Naive thymus-derived CD4-positive, alpha-beta T cell (primary cell): ENCODE measurements at regions of chr7 and their contacts with region 1.

Region 1: DNA sequence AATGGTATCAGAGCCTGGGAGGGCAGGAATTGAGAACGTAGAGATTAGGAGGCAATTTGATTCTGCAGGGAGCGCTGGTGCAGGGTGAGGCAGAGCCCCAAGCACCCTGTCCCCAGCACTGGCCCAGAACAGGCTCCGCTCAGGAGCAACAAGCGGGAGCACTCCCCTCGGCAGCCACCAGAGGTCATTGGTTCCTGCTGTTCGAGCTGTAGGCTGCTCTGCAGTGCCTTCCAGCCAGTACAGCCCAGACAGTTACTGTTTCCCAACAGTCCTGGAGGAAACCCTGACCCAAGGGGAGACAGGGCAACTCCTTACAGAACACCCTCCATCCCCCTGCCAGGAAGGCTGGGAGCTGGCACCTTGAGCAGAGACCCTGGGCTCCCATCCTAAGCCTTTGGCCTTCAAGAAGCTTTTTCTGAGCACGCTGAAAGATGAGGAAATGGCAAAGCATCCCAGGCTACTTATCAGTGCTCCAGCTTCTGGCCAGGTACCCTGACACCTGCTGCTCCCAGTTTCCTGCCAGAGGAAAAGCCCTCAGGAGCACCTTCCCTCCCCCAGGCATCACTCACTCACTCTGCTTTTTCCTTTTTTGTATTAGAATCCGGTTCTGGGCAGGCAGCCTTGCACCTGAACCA is 71.2 kb upstream of the EFCAB10 start:
- DNase-seq: peak; percentile 34 to 68 (median 58)
- ATAC-seq: peak; percentile 82
- H3K4me3 ChIP-seq: no peak overlapping the region
- H3K4me3 Mint-ChIP-seq: no peak overlapping the region
- H3K27ac ChIP-seq: no peak overlapping the region
- H3K27ac Mint-ChIP-seq: peak overlapping the region in 2 of 9 donors; percentile 27 to 59
- H3K4me1 ChIP-seq: peaks cover 0 to 5% of the 10 kb centered on the region in 2 donors
- H3K4me1 Mint-ChIP-seq: peaks cover 9 to 24% (median 14%) of the 10 kb centered on the region in 7 donors
- H3K27me3 ChIP-seq: no peaks in the 10 kb centered on the region
- H3K27me3 Mint-ChIP-seq: no peaks in the 10 kb centered on the region

Region 2: DNA sequence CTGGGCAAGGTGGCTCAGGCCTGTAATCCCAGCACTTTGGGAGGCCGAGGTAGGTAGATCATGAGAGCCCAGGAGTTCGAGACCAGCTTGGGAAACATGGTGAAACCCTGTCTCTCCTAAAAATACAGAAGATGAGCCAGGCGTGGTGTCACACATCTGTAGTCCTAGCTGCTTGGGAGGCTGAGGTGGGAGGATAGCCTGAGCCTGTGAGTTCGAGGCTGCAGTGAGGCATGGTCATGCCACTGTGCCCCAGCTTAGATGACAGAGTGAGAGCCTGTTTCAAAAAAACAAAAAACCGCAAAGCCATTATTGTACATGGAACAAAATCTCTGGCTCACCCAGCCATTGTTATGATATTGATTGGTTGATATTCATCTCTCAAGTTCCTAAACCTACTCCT is 584.8 kb before region 1 on chr7:
- CTCF ChIA-PET with region 1: no interaction called
- POLR2A ChIA-PET with region 1: no interaction called
- intact Hi-C with region 1: no loop called
- DNase-seq: no peak
- ATAC-seq: no peak
- H3K4me3 ChIP-seq: no peak overlapping the region
- H3K4me3 Mint-ChIP-seq: no peak overlapping the region
- H3K27ac ChIP-seq: no peak overlapping the region
- H3K27ac Mint-ChIP-seq: peak overlapping the region in 5 of 9 donors; percentile 13 to 56 (median 15)
- H3K4me1 ChIP-seq: peaks cover 0 to 6% of the 10 kb centered on the region in 2 donors
- H3K4me1 Mint-ChIP-seq: peaks cover 14 to 45% (median 21%) of the 10 kb centered on the region in 7 donors
- H3K27me3 ChIP-seq: no peaks in the 10 kb centered on the region
- H3K27me3 Mint-ChIP-seq: no peaks in the 10 kb centered on the region

Region 3: GRCh38 chr7:105173586-105173985 is 478.9 kb before region 1 on chr7:
- CTCF ChIA-PET with region 1: no interaction called
- POLR2A ChIA-PET with region 1: no interaction called
- intact Hi-C with region 1: no loop called
- DNase-seq: no peak
- ATAC-seq: no peak
- H3K4me3 ChIP-seq: no peak overlapping the region
- H3K4me3 Mint-ChIP-seq: no peak overlapping the region
- H3K27ac ChIP-seq: no peak overlapping the region
- H3K27ac Mint-ChIP-seq: peak overlapping the region in 1 of 9 donors; percentile 54
- H3K4me1 ChIP-seq: no peaks in the 10 kb centered on the region
- H3K4me1 Mint-ChIP-seq: peaks cover 7 to 49% (median 28%) of the 10 kb centered on the region in 7 donors
- H3K27me3 ChIP-seq: no peaks in the 10 kb centered on the region
- H3K27me3 Mint-ChIP-seq: no peaks in the 10 kb centered on the region

Region 4: DNA sequence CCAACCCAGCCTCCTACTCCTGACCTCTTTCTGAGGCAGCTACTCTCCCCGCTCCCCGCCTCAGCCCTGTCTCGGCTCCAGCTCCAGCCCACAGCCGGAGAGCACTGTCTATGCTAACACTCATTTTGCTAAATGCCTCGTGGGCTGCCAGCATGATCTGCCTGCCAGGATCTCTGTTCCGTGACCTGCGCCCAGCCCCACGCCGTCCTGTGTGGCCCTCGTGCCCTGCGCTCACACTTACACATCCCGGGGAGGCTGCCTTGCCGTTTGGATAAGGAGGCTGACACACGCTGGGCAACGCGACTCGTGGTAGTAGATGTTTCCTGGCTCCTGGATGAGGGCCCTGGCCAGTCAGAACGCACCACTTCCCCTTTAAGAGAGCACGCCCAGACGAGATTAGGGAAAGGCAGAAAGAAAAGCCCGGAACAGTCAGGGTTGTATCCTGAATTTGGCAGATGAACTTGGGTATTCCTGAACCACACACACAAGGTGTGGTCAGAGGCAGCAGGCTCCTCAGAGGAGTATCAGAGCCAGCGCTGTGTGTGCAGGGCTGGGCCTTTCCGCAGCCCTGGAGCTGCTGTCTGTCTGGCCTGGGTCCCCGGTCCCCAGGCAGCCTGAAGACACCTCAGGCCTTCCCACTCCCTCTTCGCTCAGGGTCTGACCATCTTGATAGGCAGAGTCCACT is 26.5 kb after region 1 on chr7:
- CTCF ChIA-PET with region 1: interaction called, 5 read pairs
- POLR2A ChIA-PET with region 1: interaction called, 3 read pairs
- intact Hi-C with region 1: loop called in 1 of 2 experiments (anchors 2 kb)
- DNase-seq: peak in 5 of 9 donors; percentile 11 to 33 (median 26)
- ATAC-seq: peak; percentile 47
- H3K4me3 ChIP-seq: peak overlapping the region; percentile 30
- H3K4me3 Mint-ChIP-seq: peak overlapping the region; percentile 76 to 97 (median 86)
- H3K27ac ChIP-seq: peak overlapping the region; percentile 59
- H3K27ac Mint-ChIP-seq: peak overlapping the region; percentile 87 to 99 (median 95)
- H3K4me1 ChIP-seq: peaks cover 41 to 43% of the 10 kb centered on the region in 2 donors
- H3K4me1 Mint-ChIP-seq: peaks cover 56 to 94% (median 86%) of the 10 kb centered on the region in 7 donors
- H3K27me3 ChIP-seq: no peaks in the 10 kb centered on the region
- H3K27me3 Mint-ChIP-seq: no peaks in the 10 kb centered on the region

Region 5: GRCh38 chr7:105759670-105760550 is 107.4 kb after region 1 on chr7:
- CTCF ChIA-PET with region 1: interaction called, 6 read pairs
- POLR2A ChIA-PET with region 1: interaction called, 7 read pairs
- intact Hi-C with region 1: loop called (anchors 1 to 2 kb)
- DNase-seq: peak in 2 of 9 donors; percentile 21 to 24
- ATAC-seq: peak; percentile 52
- H3K4me3 ChIP-seq: no peak overlapping the region
- H3K4me3 Mint-ChIP-seq: peak overlapping the region in 8 of 10 donors; percentile 1 to 82 (median 54)
- H3K27ac ChIP-seq: no peak overlapping the region
- H3K27ac Mint-ChIP-seq: peak overlapping the region in 8 of 9 donors; percentile 32 to 90 (median 76)
- H3K4me1 ChIP-seq: peaks cover 31 to 32% of the 10 kb centered on the region in 2 donors
- H3K4me1 Mint-ChIP-seq: peaks cover 22 to 53% (median 43%) of the 10 kb centered on the region in 7 donors
- H3K27me3 ChIP-seq: no peaks in the 10 kb centered on the region
- H3K27me3 Mint-ChIP-seq: peaks cover 0 to 11% (median 0%) of the 10 kb centered on the region in 5 donors

Region 6: GRCh38 chr7:105830391-105831301 is 178.2 kb after region 1 on chr7:
- CTCF ChIA-PET with region 1: no interaction called
- POLR2A ChIA-PET with region 1: no interaction called
- intact Hi-C with region 1: no loop called
- DNase-seq: no peak
- ATAC-seq: no peak
- H3K4me3 ChIP-seq: no peak overlapping the region
- H3K4me3 Mint-ChIP-seq: no peak overlapping the region
- H3K27ac ChIP-seq: no peak overlapping the region
- H3K27ac Mint-ChIP-seq: no peak overlapping the region
- H3K4me1 ChIP-seq: no peaks in the 10 kb centered on the region
- H3K4me1 Mint-ChIP-seq: peaks cover 8 to 40% (median 24%) of the 10 kb centered on the region in 7 donors
- H3K27me3 ChIP-seq: no peaks in the 10 kb centered on the region
- H3K27me3 Mint-ChIP-seq: peaks cover 0 to 31% (median 0%) of the 10 kb centered on the region in 5 donors

Region 7: DNA sequence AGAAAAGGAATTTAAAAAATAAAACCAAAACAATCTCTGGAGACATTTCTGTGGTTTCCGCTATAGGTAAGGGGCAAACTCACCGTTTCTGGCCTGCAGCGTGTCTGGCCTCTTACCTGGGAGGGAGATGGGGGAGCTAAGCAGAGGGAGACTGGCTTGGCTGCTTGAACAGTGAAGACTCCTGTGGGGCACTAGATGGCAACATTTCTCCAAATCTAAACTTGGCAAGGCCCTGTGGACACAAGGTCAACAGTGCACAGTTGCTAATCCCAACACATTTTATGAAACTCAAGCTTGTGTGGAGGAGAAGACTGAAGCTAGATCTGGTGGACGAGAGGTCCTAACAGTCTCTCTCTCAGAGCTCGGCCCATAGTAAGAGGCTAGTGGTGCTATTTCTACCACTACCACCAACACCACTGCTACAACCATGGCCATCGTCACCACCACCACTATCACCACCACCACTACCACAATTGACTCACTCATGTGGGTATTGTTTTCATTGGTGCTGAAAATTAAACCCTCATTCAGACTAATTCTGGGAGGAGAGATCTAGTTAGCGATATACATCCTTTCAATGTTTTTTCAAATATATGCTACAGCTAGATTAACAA is 282.2 kb after region 1 on chr7:
- CTCF ChIA-PET with region 1: no interaction called
- POLR2A ChIA-PET with region 1: no interaction called
- intact Hi-C with region 1: loop called in 1 of 2 experiments (anchors 10 kb)
- DNase-seq: peak in 3 of 9 donors; percentile 9 to 23 (median 10)
- ATAC-seq: no peak
- H3K4me3 ChIP-seq: no peak overlapping the region
- H3K4me3 Mint-ChIP-seq: no peak overlapping the region
- H3K27ac ChIP-seq: no peak overlapping the region
- H3K27ac Mint-ChIP-seq: peak overlapping the region in 3 of 9 donors; percentile 9 to 81 (median 10)
- H3K4me1 ChIP-seq: peaks cover 0 to 7% of the 10 kb centered on the region in 2 donors
- H3K4me1 Mint-ChIP-seq: peaks cover 0 to 33% (median 14%) of the 10 kb centered on the region in 7 donors
- H3K27me3 ChIP-seq: no peaks in the 10 kb centered on the region
- H3K27me3 Mint-ChIP-seq: peaks cover 0 to 36% (median 0%) of the 10 kb centered on the region in 5 donors

Region 8: GRCh38 chr7:105945848-105946247 is 293.4 kb after region 1 on chr7:
- CTCF ChIA-PET with region 1: no interaction called
- POLR2A ChIA-PET with region 1: no interaction called
- intact Hi-C with region 1: no loop called
- DNase-seq: no peak
- ATAC-seq: no peak
- H3K4me3 ChIP-seq: no peak overlapping the region
- H3K4me3 Mint-ChIP-seq: no peak overlapping the region
- H3K27ac ChIP-seq: no peak overlapping the region
- H3K27ac Mint-ChIP-seq: no peak overlapping the region
- H3K4me1 ChIP-seq: no peaks in the 10 kb centered on the region
- H3K4me1 Mint-ChIP-seq: peaks cover 0 to 1% (median 0%) of the 10 kb centered on the region in 7 donors
- H3K27me3 ChIP-seq: no peaks in the 10 kb centered on the region
- H3K27me3 Mint-ChIP-seq: peaks cover 0 to 21% (median 0%) of the 10 kb centered on the region in 5 donors

Region 9: DNA sequence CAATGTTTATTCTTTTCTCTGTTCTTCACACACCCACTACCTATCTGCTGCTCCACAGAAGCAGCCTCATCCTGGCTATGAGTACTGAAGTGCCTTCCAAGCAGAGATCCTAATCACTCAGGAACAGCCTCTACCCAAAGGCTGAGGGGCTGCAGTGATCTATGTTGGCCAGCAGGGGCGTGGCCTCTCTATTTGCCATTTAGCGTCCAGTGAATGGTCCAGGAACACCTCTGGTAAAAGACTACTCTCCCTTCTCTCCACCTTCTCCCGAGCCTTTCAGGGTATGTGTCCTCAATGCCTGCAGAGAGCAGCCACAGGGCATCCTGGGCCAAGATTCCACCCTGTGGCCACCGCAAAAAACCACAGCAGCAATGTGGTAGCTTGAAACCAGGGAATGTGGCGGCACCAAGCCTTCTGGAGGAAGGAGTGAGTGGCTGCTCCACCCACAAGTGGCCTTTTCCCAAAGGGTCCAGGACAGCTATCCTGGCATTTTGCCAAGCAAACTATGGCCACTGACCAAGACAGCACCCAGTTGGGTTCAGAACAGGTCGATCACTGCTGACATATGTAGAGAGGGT is 388.8 kb after region 1 on chr7:
- CTCF ChIA-PET with region 1: interaction called, 8 read pairs
- POLR2A ChIA-PET with region 1: interaction called, 7 read pairs
- intact Hi-C with region 1: loop called (anchors 1 kb)
- DNase-seq: peak in 3 of 9 donors; percentile 22 to 32 (median 25)
- ATAC-seq: peak; percentile 56
- H3K4me3 ChIP-seq: no peak overlapping the region
- H3K4me3 Mint-ChIP-seq: peak overlapping the region in 8 of 10 donors; percentile 5 to 68 (median 58)
- H3K27ac ChIP-seq: no peak overlapping the region
- H3K27ac Mint-ChIP-seq: peak overlapping the region in 8 of 9 donors; percentile 32 to 91 (median 73)
- H3K4me1 ChIP-seq: peaks cover 5 to 33% of the 10 kb centered on the region in 2 donors
- H3K4me1 Mint-ChIP-seq: peaks cover 18 to 58% (median 38%) of the 10 kb centered on the region in 7 donors
- H3K27me3 ChIP-seq: no peaks in the 10 kb centered on the region
- H3K27me3 Mint-ChIP-seq: peaks cover 0 to 48% (median 0%) of the 10 kb centered on the region in 5 donors